Activated B cell treated with CpG ODN at 0.5 μM for 24 hours (primary cell): ENCODE measurements at regions of chr17 and their contacts with region 1.

Region 1: DNA sequence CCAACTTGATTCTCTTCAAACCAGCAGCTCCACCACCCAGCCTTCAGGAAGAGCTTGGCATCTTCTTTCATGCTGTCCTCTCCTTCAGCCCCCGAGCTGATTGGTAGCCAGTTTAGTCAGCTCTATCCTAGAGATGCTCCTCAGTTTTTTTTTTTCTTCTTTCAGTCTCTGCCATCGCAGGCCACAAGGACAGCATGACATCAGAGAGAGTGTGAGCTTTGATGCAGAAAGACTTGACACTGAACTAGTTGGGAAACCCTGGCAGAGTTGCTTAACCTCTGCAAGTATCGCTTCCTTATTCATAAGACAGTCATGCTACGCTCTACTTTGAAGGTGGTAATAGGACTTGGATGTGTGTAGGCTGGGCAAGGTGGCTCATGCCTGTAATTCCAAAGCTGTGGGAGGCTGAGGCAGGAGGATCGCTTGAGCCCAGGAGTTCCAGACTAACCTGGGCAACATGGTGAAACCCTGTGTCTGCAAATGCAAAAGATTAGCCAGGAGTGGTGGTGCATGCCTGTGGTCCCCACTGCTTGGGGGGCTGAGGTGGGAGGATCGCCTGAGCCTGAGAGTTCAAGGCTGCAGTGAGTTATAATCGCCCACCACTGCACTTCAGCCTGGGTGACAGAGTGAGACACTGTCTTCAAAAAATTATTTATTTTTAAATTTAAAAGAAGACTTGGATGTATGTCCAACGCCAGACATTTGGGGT is 2.6 kb downstream of the CD300LB start:
- DNase-seq: peak; percentile 12
- ATAC-seq: peak; percentile 89
- H3K4me3 Mint-ChIP-seq: no peak overlapping the region
- H3K27ac Mint-ChIP-seq: peak overlapping the region; percentile 27
- H3K4me1 Mint-ChIP-seq: peaks cover 32% of the 10 kb centered on the region
- H3K27me3 Mint-ChIP-seq: peaks cover 7% of the 10 kb centered on the region
- CTCF ChIP-seq: no peak

Region 2: DNA sequence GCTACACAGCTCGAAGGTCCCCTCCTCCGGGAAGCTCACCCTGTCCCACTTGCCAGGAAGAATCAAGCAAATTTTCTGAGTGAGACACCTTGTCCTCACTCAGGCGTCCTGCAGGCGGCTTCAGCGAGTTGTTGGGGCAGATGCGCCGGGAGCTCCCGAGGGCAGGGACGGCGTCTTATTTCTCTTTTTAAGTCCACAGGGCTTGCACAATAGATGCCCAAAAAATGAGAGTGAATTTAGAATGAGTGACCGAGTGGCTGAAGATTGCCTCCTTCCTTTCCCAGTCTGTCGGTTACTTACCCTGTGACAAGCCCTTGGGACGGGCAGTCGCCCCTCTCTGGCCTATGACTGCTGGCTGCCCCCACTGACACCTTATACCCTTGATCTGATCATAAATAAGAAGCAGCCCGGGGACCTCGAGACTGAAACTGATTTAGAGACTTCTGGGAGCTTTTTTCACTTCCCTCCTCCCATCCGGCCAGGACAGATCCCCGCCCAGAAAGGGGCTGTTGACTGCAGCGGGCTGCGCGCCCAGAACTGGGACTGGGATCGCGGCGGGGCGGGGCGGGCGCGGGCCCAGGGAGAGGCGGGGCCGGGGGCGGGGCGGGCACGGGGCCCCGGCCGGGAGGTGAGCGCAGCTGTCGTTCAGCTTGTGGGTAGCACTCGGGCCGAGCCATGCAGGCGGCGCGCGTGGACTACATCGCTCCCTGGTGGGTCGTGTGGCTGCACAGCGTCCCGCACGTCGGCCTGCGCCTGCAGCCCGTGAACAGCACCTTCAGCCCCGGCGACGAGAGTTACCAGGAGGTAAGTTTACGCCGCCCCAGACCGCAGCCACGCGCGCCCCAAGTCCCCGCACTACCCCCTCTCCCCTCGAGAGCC is 315.5 kb before region 1 on chr17 and contains the start of gene TTYH2:
- CTCF ChIA-PET with region 1: no interaction called
- POLR2A ChIA-PET with region 1: no interaction called
- intact Hi-C with region 1: loop called (anchors 1 kb)
- DNase-seq: peak; percentile 66
- ATAC-seq: peak; percentile 77
- H3K4me3 Mint-ChIP-seq: peak within 1 kb of the TSS; percentile 86
- H3K27ac Mint-ChIP-seq: peak within 1 kb of the TSS; percentile 89
- H3K4me1 Mint-ChIP-seq: peaks cover 48% of the 10 kb centered on the region
- H3K27me3 Mint-ChIP-seq: no peaks in the 10 kb centered on the region
- CTCF ChIP-seq: no peak
- total RNA-seq, gene TTYH2: 2.9 and 3.8 TPM in 2 replicates

Region 3: GRCh38 chr17:74379495-74380085 is 149.1 kb before region 1 on chr17:
- CTCF ChIA-PET with region 1: interaction called, 27 read pairs
- POLR2A ChIA-PET with region 1: no interaction called
- intact Hi-C with region 1: loop called (anchors 1 kb)
- DNase-seq: peak; percentile 80
- ATAC-seq: peak; percentile 90
- H3K4me3 Mint-ChIP-seq: no peak overlapping the region
- H3K27ac Mint-ChIP-seq: no peak overlapping the region
- H3K4me1 Mint-ChIP-seq: peaks cover 2% of the 10 kb centered on the region
- H3K27me3 Mint-ChIP-seq: peaks cover 26% of the 10 kb centered on the region
- CTCF ChIP-seq: no peak

Region 4: DNA sequence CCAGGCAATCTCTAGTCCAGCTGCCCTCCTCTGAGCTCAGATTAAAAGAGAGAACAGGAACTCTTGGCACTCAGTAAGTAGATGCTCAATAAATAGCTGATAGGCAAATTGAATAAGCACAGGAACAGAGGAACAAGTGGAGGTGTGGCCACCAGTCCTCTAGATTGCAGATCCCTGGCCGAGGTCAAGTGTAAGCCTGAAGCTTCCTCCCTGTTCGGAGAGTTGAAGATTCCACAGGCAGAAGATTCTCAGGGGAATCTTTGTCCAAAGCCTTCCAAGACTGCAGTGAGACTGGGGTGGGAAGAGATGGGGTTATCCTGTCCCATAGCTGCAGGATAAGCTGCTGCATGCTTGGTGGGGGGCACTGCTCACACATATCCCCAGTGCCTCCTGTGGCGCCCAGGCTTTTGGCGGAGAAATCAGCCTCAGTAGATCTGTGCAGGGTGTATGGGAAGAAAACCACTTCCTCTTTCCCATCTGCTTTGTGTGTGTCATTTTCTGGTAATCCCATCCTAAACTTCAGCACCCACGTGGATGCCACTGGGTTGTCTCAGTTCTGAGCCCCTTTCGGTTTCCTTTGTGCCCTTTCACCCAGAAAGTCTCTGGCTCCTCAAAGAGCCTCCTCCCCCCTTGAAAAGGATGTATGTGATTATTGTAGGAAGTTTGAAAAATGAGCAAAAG is 50.1 kb before region 1 on chr17:
- CTCF ChIA-PET with region 1: no interaction called
- POLR2A ChIA-PET with region 1: no interaction called
- intact Hi-C with region 1: no loop called
- DNase-seq: no peak
- ATAC-seq: peak; percentile 52
- H3K4me3 Mint-ChIP-seq: no peak overlapping the region
- H3K27ac Mint-ChIP-seq: peak overlapping the region; percentile 25
- H3K4me1 Mint-ChIP-seq: peaks cover 19% of the 10 kb centered on the region
- H3K27me3 Mint-ChIP-seq: no peaks in the 10 kb centered on the region
- CTCF ChIP-seq: no peak

Region 5: DNA sequence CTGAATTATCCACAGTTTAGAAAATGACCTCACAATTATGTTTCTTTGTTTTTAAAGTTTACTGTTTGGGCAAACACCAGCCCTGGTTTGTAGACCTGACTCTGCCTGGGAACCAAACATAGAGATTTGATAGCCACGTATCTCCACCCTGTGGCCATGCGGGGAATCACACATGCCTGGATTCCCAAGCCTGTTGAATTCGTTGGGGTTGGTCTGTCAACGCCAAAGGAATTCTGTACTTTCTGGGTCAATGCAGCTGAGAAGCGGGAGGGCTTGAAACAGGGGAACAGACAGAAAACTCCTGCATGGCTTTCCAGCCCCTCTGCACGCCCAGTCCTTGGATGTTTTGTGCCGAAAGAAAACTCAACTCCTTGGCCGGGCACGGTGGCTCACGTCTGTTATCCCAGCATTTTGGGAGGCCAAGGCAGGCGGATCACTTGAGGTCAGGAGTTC is 35.2 kb before region 1 on chr17:
- CTCF ChIA-PET with region 1: no interaction called
- POLR2A ChIA-PET with region 1: no interaction called
- intact Hi-C with region 1: loop called (anchors 2 kb)
- DNase-seq: peak; percentile 42
- ATAC-seq: peak; percentile 75
- H3K4me3 Mint-ChIP-seq: no peak overlapping the region
- H3K27ac Mint-ChIP-seq: no peak overlapping the region
- H3K4me1 Mint-ChIP-seq: no peaks in the 10 kb centered on the region
- H3K27me3 Mint-ChIP-seq: peaks cover 3% of the 10 kb centered on the region
- CTCF ChIP-seq: peak; percentile 62

Region 6: DNA sequence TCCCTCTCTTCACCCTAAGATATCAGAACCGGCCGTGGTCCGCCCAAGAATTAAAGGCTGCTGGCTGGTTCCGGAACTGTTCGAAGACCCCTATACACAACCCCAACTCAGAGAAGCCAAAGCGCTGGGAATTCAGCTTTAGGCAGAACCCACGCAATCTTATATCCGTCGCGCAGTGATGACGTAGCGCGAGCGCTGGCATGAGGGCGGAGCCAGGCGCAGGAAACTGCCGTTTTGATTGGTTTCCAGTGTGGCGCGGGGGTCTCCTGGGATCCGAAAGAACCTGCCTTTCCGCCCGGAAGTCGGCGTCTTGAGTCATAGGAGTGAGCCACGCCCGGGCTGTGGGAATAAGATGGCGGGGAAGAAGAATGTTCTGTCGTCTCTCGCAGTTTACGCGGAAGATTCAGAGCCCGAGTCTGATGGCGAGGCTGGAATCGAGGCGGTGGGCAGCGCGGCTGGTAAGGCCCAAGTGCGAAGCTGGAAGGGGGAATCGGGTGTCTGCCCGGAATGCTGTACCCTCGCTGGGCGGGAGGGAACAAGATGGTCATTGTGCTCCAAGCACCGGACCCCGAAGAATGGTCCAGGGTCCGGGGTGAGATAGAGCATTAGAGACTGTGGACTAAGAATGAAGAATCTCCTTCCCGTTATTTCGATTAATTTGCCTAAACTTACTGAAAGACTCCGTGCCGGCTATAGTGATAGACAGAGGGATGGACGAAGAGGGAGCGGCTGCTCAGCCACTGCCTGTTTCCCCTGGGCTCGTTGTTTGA is 1138.6 kb after region 1 on chr17 and contains the starts of genes RECQL5 and SAP30BP:
- CTCF ChIA-PET with region 1: no interaction called
- POLR2A ChIA-PET with region 1: no interaction called
- intact Hi-C with region 1: no loop called
- DNase-seq: peak; percentile 95
- ATAC-seq: peak; percentile 74
- H3K4me3 Mint-ChIP-seq: peak within 1 kb of the TSS; percentile 55
- H3K27ac Mint-ChIP-seq: peak within 1 kb of the TSS; percentile 27
- H3K4me1 Mint-ChIP-seq: peaks cover 47% of the 10 kb centered on the region
- H3K27me3 Mint-ChIP-seq: no peaks in the 10 kb centered on the region
- CTCF ChIP-seq: no peak
- total RNA-seq, gene RECQL5: 55.9 and 65.4 TPM in 2 replicates
- total RNA-seq, gene SAP30BP: 177 and 184 TPM in 2 replicates